ENCODE measurements at regions of chr16 and their contacts with region 1.

Region 1: GRCh38 chr16:11354733-11355574 is 9.7 kb downstream of the RMI2 start:
- DNase-seq: peak; percentile 80
- H3K4me3 Mint-ChIP-seq: peak overlapping the region; percentile 71
- H3K27ac Mint-ChIP-seq: peak overlapping the region; percentile 83
- H3K4me1 Mint-ChIP-seq: peaks cover 64% of the 10 kb centered on the region
- H3K27me3 Mint-ChIP-seq: peaks cover 4% of the 10 kb centered on the region

Region 2: GRCh38 chr16:10954903-10955302 is 400.1 kb before region 1 on chr16:
- intact Hi-C with region 1: loop called (anchors 2 kb)
- DNase-seq: no peak
- H3K4me3 Mint-ChIP-seq: peak overlapping the region; percentile 23
- H3K27ac Mint-ChIP-seq: no peak overlapping the region
- H3K4me1 Mint-ChIP-seq: peaks cover 28% of the 10 kb centered on the region
- H3K27me3 Mint-ChIP-seq: no peaks in the 10 kb centered on the region

Region 3: DNA sequence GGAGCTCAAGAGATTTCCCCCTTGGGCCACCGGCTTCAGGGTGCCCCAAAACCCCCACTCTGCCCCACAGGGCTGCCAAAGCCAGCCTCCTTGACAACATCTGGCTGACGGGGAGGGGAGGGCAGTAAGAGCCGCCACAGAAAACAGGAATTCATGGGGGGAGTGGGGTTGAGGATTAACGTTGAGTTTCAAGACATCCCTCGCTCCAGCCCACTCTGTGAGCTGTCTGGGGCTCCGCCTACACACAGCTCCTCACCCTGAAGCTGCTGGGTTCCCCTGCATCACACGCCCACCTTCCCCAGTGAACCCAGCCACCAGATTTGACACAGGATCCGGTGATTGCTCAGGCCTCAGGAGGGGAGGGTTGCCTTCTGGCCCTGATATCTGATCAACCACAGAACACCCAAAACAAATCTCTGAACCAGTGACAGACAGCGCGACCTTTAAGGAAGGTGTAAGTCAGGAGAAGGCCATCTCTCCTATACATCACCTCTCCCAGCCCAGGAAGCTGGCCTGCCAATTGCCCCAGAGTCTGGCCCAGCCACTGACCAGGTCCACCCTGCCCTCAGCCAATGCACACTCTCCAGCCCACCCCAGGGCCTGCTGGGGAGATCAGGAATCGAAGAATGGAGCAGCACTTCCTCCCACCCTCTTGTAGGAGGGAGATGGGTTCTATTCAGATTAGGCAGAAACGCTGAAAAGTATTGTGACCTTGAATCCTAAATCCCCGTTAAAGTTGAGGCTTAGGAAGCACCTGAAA is 278.5 kb before region 1 on chr16:
- intact Hi-C with region 1: loop called (anchors 1 kb)
- DNase-seq: peak; percentile 36
- H3K4me3 Mint-ChIP-seq: peak overlapping the region; percentile 48
- H3K27ac Mint-ChIP-seq: peak overlapping the region; percentile 90
- H3K4me1 Mint-ChIP-seq: peaks cover 94% of the 10 kb centered on the region
- H3K27me3 Mint-ChIP-seq: peaks cover 2% of the 10 kb centered on the region

Region 4: GRCh38 chr16:11232852-11233726 is 121.9 kb before region 1 on chr16:
- intact Hi-C with region 1: loop called (anchors 1 kb)
- DNase-seq: peak; percentile 91
- H3K4me3 Mint-ChIP-seq: peak overlapping the region; percentile 59
- H3K27ac Mint-ChIP-seq: peak overlapping the region; percentile 95
- H3K4me1 Mint-ChIP-seq: peaks cover 89% of the 10 kb centered on the region
- H3K27me3 Mint-ChIP-seq: no peaks in the 10 kb centered on the region

Region 5: DNA sequence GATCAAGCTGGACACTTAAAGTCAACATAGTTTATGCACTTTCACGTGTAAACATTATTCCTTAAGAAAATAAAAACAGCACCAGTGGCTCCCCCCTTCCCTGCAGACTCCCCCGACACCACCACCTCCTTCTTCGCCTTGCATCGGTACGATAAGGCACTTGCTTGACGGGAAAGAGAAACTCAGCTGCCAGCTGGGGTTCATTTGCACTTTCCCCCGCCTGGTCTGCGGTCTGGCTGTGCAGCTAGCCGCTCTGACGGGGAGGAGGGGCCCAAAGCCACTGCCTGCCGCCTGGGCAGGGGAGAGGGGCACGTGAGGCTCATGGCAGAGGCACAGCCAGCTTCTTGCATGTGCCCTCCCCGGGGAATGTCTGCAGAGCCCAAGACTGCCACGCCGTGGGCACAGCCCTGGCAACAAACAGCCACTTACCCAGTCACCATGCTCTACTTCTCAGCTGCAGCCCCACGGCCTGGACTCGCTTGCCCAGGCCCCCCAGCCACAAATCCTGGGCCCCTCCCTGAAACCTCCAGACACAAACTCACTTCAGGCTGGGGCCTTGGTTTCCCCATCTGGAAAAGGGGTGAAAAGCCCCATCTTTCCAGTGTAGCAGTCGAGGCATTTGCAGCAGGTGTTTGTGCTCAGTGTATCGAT is 57.3 kb before region 1 on chr16:
- intact Hi-C with region 1: loop called (anchors 1 kb)
- DNase-seq: peak; percentile 70
- H3K4me3 Mint-ChIP-seq: peak overlapping the region; percentile 42
- H3K27ac Mint-ChIP-seq: no peak overlapping the region
- H3K4me1 Mint-ChIP-seq: peaks cover 34% of the 10 kb centered on the region
- H3K27me3 Mint-ChIP-seq: peaks cover 28% of the 10 kb centered on the region

Region 6: GRCh38 chr16:11328172-11329070 is 26.5 kb before region 1 on chr16:
- intact Hi-C with region 1: loop called (anchors 1 kb)
- DNase-seq: peak; percentile 55
- H3K4me3 Mint-ChIP-seq: peak overlapping the region; percentile 68
- H3K27ac Mint-ChIP-seq: peak overlapping the region; percentile 74
- H3K4me1 Mint-ChIP-seq: peaks cover 69% of the 10 kb centered on the region
- H3K27me3 Mint-ChIP-seq: peaks cover 5% of the 10 kb centered on the region

Measured in activated T-helper 1 cell treated with anti-CD3 and anti-CD28 coated beads, Interleukin-12 subunit alpha, Interleukin-12 subunit beta, Interleukin-2, Interleukin-4 antibody, amounts not matched to agents 30 ng/mL and 10 ng/mL and 1 ng/mL, durations not matched to agents 14 hours and 24 hours and 36 hours (primary cell).